Aorta (tissue), 5 donors: ENCODE measurements at regions of chr17 and their contacts with region 1.

Region 1: DNA sequence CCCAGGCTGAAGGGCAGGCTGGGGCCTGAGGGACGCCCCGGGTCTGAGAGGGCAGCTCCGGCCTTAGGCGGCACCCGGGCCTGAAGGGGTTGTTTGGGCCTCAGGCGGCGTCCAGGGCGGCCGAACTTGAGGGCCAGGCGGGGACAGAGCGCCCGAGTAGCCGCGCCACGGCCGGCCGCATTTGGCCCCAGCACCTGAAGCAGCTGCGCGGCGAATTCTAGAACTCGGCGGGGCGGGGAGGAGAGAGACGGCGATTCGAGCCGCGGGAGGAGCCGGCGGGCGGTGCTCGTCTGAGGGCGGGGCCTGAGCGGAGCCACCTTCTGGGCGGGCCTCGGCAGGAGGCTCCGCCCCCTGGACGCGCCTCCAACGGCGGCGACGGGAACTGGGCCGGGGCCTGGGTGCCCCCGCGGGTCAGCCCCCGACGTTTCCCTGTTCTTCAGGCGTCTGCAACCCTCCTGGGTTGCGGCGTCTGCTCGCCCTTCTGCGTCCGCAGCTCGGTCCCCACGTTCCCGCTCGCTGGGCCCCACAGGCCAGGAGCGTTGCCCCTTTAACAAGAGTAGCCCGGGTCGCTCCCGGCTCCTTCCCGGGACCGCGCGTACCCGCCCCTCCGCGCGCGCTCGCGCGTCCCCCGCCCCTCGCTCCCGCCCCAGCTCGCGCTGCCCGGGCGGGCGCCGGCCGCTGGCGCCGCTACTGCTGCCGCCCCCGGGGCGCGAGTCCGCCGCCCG is at the starts of genes INCA1 and KIF1C:
- DNase-seq: peak; percentile 96 to 97
- ATAC-seq: peak; percentile 96
- H3K4me3 ChIP-seq: peak within 1 kb of the TSS; percentile 62 to 87
- H3K27ac ChIP-seq: peak within 1 kb of the TSS; percentile 64 to 86
- H3K4me1 ChIP-seq: no peaks in the 10 kb centered on the region
- H3K27me3 ChIP-seq: no peaks in the 10 kb centered on the region
- total RNA-seq, gene INCA1: 1.2 to 1.9 TPM
- total RNA-seq, gene KIF1C: 187 to 235 TPM

Region 2: GRCh38 chr17:4939796-4940624 is 57.5 kb before region 1 on chr17 and contains the starts of genes RNF167 and SLC25A11:
- intact Hi-C with region 1: loop called (anchors 5 kb)
- DNase-seq: peak; percentile 96 to 98
- ATAC-seq: peak; percentile 96
- H3K4me3 ChIP-seq: peak within 1 kb of the TSS; percentile 56 to 86
- H3K27ac ChIP-seq: peak within 1 kb of the TSS in 1 of 2 donors; percentile 79
- H3K4me1 ChIP-seq: no peaks in the 10 kb centered on the region
- H3K27me3 ChIP-seq: no peaks in the 10 kb centered on the region
- total RNA-seq, gene RNF167: 45.6 to 51.8 TPM
- total RNA-seq, gene SLC25A11: 28.3 to 29.5 TPM

Region 3: GRCh38 chr17:4948931-4949320 is 48.5 kb before region 1 on chr17:
- intact Hi-C with region 1: loop called in 1 of 2 experiments (anchors 5 kb)
- DNase-seq: peak; percentile 91 to 94
- ATAC-seq: peak; percentile 90
- H3K4me3 ChIP-seq: peak overlapping the region; percentile 72 to 75
- H3K27ac ChIP-seq: peak overlapping the region in 1 of 2 donors; percentile 89
- H3K4me1 ChIP-seq: no peaks in the 10 kb centered on the region
- H3K27me3 ChIP-seq: peaks cover 0 to 2% of the 10 kb centered on the region in 2 donors

Region 4: GRCh38 chr17:4966844-4967538 is 30.5 kb before region 1 on chr17:
- intact Hi-C with region 1: loop called in 1 of 2 experiments (anchors 1 kb)
- DNase-seq: peak; percentile 97 to 99
- ATAC-seq: peak; percentile 96
- H3K4me3 ChIP-seq: peak overlapping the region; percentile 51 to 65
- H3K27ac ChIP-seq: peak overlapping the region in 1 of 2 donors; percentile 62
- H3K4me1 ChIP-seq: peaks cover 0 to 2% of the 10 kb centered on the region in 2 donors
- H3K27me3 ChIP-seq: no peaks in the 10 kb centered on the region